Posterior vena cava (tissue), 2 donors: ENCODE measurements at regions of chr10 and their contacts with region 1.

Region 1: GRCh38 chr10:17430647-17431355 is 23.6 kb downstream of the ST8SIA6 start:
- DNase-seq: peak; percentile 87

Region 2: GRCh38 chr10:16832351-16833080 is 598.3 kb before region 1 on chr10:
- intact Hi-C with region 1: loop called in 1 of 2 experiments (anchors 10 kb)
- DNase-seq: no peak

Region 3: GRCh38 chr10:17454161-17455014 is 23.6 kb after region 1 on chr10 and contains the start of gene ST8SIA6:
- intact Hi-C with region 1: no loop called
- DNase-seq: peak; percentile 82
- total RNA-seq, gene ST8SIA6: 3.1 to 4.5 TPM

Region 4: DNA sequence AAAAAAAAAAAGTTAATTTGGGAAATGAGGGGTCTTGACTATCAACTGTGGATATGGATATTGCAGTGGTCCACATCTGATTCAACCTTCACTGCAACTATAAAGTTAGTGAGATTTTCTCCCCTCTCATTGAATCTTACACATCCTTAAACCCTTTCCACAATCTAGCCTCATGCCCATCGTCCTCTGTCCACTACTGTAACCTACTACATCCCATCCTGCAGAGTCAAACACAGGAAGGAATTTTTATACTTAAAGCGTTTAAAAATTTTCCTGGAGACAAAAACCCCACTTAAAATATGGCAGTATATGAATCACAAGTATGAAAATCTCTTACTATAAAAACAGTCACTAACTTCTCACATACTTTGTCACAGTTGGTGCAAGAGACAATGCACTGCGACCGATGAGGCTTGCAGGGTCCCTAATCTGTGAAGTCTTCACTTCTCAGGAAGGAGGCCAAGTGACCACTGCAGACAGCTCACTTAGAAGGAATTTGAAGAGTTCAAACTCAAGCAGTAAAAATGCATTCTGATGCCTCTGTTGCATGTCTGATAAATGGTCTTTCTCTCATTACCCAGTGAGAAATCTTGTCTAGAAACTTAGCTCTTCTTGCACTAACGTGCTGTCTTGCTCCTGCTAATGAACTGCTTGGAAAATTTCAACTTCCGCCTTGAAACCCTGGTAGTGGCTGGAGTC is 73.9 kb after region 1 on chr10:
- intact Hi-C with region 1: no loop called
- DNase-seq: no peak